MCF 10A (cell line): ENCODE measurements at regions of chr7 and their contacts with region 1.

Region 1: DNA sequence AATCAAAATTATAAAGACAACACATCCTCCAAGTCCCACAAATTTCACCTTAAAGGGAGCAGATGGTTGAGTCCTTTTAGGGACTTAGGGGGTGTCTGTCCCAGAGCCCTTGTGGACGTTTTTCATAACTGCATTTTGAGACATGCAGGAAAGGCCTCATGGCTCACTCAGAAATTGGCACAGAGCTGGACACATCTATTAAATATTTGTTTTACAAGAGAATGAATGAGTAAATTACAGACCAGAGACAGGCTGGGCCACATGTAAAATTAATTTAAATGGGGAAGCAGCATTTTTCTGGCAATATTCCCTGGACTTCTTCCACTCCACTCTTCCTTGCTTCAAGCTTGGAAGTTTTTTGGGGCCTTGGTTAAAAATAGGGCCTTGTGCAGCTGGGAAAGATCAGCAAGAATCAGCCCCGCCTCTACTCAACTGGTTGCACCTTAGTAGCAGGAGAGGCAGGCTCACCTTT is 20.0 kb downstream of the LAMB1 start:
- DNase-seq: no peak
- H3K4me3 Mint-ChIP-seq: no peak overlapping the region
- H3K27ac Mint-ChIP-seq: no peak overlapping the region
- H3K4me1 Mint-ChIP-seq: peaks cover 11% of the 10 kb centered on the region
- H3K27me3 Mint-ChIP-seq: no peaks in the 10 kb centered on the region
- CTCF ChIP-seq: no peak

Region 2: DNA sequence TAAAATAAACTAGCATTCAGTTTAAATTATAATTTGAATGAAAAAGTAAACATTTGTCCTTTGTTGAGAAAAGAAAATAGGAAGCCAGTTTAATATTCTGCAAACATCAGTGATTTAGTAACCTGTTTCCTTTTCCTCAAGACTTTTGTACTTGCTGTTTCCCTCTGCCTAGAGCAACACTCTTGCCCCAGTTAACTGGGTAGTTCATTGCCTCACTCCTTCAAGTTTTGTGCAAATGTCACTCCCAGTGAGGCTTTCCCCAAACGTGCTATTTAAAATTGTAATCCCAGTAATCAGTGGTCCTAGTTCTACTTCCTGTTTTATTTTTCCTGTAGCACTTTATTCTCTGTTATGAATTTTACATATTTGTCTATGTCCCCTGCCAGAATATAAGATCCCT is 68.1 kb before region 1 on chr7:
- CTCF ChIA-PET with region 1: no interaction called
- POLR2A ChIA-PET with region 1: no interaction called
- intact Hi-C with region 1: no loop called
- DNase-seq: no peak
- H3K4me3 Mint-ChIP-seq: no peak overlapping the region
- H3K27ac Mint-ChIP-seq: no peak overlapping the region
- H3K4me1 Mint-ChIP-seq: peaks cover 24% of the 10 kb centered on the region
- H3K27me3 Mint-ChIP-seq: no peaks in the 10 kb centered on the region
- CTCF ChIP-seq: no peak

Region 3: GRCh38 chr7:107958764-107959526 is 24.0 kb before region 1 on chr7:
- CTCF ChIA-PET with region 1: interaction called, 4 read pairs
- POLR2A ChIA-PET with region 1: interaction called, 35 read pairs
- intact Hi-C with region 1: no loop called
- DNase-seq: peak; percentile 92
- H3K4me3 Mint-ChIP-seq: no peak overlapping the region
- H3K27ac Mint-ChIP-seq: peak overlapping the region; percentile 91
- H3K4me1 Mint-ChIP-seq: peaks cover 27% of the 10 kb centered on the region
- H3K27me3 Mint-ChIP-seq: no peaks in the 10 kb centered on the region
- CTCF ChIP-seq: no peak